Kidney (tissue), 22 donors: ENCODE measurements at regions of chr7 and their contacts with region 1.

Region 1: GRCh38 chr7:27179503-27180430 is 5.3 kb downstream of the HOXA11 start:
- DNase-seq: peak; percentile 93 to 97 (median 95)
- H3K4me3 ChIP-seq: peak overlapping the region; percentile 67 to 86 (median 68)
- H3K27ac ChIP-seq: peak overlapping the region; percentile 60 to 94
- H3K4me1 ChIP-seq: peaks cover 0 to 4% (median 0%) of the 10 kb centered on the region in 3 donors
- H3K27me3 ChIP-seq: no peaks in the 10 kb centered on the region
- CTCF ChIP-seq: peak; percentile 75

Region 2: DNA sequence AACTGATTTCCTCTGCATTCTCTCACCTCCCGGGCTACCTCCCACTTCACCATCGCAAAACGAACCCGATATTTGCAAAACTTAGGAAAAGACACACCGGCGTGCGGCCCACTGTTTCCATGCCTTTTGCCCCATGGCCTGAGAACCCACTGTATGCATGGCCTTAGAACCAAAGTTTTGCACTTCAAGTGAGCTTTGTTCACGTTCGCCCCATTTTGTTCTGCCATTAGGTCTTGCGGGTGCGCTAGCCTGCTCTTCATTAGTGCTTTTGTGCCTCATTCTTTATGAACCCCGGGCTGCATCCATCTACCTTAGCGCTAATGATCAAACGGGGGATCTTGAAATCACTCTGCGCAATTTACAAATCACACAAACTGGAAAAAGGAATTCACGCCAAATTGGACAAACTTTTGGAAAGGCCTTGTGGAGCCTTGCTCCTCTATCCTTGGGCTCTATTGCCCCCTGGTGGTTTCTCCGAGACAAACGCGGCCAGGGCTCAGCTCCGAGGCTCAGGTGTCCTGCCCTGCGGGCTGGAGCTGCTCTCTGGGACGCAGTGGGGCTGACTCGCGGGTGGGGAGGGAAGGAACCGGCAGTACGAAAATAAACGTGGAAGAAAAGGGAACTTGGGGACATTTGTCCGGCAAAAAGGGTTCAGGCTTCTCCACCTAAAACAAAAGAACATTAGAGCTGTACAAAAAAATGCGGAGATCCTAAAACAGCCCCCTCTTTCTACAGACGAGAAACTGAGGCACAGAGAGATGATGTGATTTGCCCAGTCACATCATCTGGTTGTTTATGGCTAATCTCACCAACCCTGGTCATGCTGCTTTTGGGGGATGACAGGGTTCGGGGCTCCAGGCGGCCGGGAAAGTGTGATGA is 1328.2 kb before region 1 on chr7:
- intact Hi-C with region 1: loop called (anchors 10 kb)
- DNase-seq: peak; percentile 91 to 96 (median 95)
- H3K4me3 ChIP-seq: no peak overlapping the region
- H3K27ac ChIP-seq: peak overlapping the region; percentile 40 to 51
- H3K4me1 ChIP-seq: peaks cover 2 to 17% (median 8%) of the 10 kb centered on the region in 3 donors
- H3K27me3 ChIP-seq: no peaks in the 10 kb centered on the region
- CTCF ChIP-seq: peak; percentile 66

Region 3: GRCh38 chr7:27046854-27047549 is 132.8 kb before region 1 on chr7:
- intact Hi-C with region 1: no loop called
- DNase-seq: no peak
- H3K4me3 ChIP-seq: no peak overlapping the region
- H3K27ac ChIP-seq: no peak overlapping the region
- H3K4me1 ChIP-seq: no peaks in the 10 kb centered on the region
- H3K27me3 ChIP-seq: no peaks in the 10 kb centered on the region
- CTCF ChIP-seq: no peak